ENCODE measurements at regions of chr16 and their contacts with region 1.

Region 1: DNA sequence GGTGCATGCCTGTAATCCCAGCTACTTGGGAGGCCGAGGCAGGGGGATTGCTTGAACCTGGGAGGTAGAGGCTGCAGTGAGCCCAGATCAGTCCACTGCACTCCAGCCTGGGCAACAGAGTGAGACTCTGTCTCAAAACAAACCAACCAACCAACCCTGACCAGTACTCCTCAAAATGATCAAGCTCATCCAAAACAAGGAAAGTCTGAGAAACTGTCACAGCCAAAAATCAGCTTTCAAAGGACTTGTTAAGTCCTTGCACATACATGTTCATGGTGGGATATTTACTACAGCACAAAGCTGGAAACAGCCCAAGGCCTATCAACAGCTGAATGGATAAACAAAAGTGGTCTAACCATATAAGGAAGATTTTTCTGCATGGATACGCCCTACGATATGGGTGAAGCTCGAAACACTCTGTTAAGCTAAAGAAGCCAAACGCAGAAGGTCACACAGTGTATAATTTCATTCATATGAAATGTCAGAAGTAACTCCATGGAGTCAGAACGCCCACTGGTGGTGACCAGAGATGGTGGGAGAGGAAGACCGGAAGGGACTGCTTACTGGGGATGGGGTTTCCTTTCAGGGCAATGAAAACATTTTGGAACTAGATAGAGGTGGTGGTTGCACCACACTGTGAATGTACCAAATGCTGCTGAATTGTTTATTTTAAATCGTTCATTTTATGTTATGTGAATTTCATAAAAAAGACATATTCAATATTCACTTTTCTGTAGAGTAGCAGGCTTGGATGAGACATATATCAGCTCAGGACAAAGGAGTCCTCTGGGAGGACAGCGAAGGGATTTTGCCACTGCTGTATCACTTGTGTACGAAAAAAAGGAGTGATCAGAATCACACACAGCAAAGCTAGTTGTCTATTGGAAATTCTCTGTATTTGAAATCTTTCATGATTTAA is 17.7 kb downstream of the CCL17 start:
- H3K4me3 ChIP-seq: no peak overlapping the region
- H3K27ac ChIP-seq: no peak overlapping the region
- H3K4me1 ChIP-seq: no peaks in the 10 kb centered on the region
- CTCF ChIP-seq: peak; percentile 74

Region 2: GRCh38 chr16:57300387-57301125 is 121.7 kb before region 1 on chr16:
- CTCF ChIA-PET with region 1: interaction called, 290 read pairs
- POLR2A ChIA-PET with region 1: interaction called, 7 read pairs
- H3K4me3 ChIP-seq: peak overlapping the region; percentile 38
- H3K27ac ChIP-seq: no peak overlapping the region
- H3K4me1 ChIP-seq: no peaks in the 10 kb centered on the region
- CTCF ChIP-seq: peak; percentile 99

Region 3: DNA sequence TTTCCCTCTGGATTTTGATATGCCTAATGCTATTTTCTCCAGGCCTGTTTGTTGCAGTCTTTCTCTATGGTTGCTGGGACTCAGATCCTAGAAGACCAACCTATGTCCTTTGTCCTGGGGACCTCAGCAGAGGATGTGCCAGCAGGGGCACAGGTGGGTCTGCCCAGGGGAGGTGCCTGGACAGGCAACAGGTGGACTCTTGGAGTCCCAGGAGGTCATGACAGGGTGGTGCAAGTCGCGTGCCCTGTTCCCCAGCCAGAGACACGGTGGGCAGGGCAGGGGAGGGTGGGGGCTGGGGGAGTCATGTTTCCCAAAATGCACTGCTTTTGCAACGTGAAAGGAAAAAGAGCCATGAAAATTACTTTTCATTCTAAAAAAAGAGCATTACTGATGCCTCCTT is 111.5 kb before region 1 on chr16:
- CTCF ChIA-PET with region 1: interaction called, 290 read pairs
- POLR2A ChIA-PET with region 1: no interaction called
- H3K4me3 ChIP-seq: no peak overlapping the region
- H3K27ac ChIP-seq: no peak overlapping the region
- H3K4me1 ChIP-seq: no peaks in the 10 kb centered on the region
- CTCF ChIP-seq: no peak

Region 4: GRCh38 chr16:57341441-57342303 is 80.6 kb before region 1 on chr16:
- CTCF ChIA-PET with region 1: interaction called, 10 read pairs
- POLR2A ChIA-PET with region 1: no interaction called
- H3K4me3 ChIP-seq: no peak overlapping the region
- H3K27ac ChIP-seq: no peak overlapping the region
- H3K4me1 ChIP-seq: peaks cover 5% of the 10 kb centered on the region
- CTCF ChIP-seq: no peak

Region 5: GRCh38 chr16:57432989-57433388 is 10.7 kb after region 1 on chr16:
- CTCF ChIA-PET with region 1: interaction called, 11 read pairs
- POLR2A ChIA-PET with region 1: no interaction called
- H3K4me3 ChIP-seq: no peak overlapping the region
- H3K27ac ChIP-seq: no peak overlapping the region
- H3K4me1 ChIP-seq: no peaks in the 10 kb centered on the region
- CTCF ChIP-seq: no peak

Region 6: DNA sequence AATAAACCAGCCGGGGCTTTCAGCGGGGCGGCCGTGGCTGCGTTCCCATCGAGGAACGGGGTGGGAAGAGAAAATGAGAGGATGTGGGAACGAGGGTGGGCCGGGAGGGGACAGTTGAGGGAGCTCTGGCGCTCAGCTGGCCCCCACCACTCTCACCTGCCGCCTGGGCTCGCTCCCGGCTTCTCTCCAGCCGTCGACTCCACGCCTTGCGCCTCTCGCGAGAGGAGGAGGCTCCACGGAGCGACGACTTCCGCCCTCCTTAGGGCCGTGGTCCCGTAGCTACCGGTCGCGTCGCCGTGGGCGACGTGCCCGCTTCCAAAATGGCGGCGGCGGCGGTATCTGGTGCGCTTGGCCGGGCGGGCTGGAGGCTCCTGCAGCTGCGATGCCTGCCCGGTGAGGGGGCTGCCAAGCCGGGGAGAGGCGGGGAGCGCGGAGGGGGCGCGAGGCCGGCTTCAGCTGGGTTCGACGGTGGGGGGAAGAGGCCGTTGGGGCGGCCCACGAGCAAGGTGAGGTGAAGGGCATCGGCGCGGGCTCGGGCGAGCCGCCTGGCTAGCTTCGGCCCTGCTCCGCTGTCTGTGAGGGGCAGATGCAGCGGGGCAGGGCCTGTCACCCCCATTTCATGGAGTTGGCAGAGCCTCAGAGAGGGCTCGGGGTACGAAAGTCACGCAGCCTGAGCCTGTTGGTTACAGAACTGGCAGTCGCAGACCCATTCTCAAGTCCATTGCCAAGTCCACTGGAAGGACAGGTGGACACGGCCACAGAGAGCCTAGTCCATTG is 25.1 kb after region 1 on chr16 and contains the starts of genes CIAPIN1 and COQ9:
- CTCF ChIA-PET with region 1: interaction called, 17 read pairs
- POLR2A ChIA-PET with region 1: interaction called, 15 read pairs
- H3K4me3 ChIP-seq: peak within 1 kb of the TSS; percentile 95
- H3K27ac ChIP-seq: peak within 1 kb of the TSS; percentile 77
- H3K4me1 ChIP-seq: no peaks in the 10 kb centered on the region
- CTCF ChIP-seq: no peak

Region 7: DNA sequence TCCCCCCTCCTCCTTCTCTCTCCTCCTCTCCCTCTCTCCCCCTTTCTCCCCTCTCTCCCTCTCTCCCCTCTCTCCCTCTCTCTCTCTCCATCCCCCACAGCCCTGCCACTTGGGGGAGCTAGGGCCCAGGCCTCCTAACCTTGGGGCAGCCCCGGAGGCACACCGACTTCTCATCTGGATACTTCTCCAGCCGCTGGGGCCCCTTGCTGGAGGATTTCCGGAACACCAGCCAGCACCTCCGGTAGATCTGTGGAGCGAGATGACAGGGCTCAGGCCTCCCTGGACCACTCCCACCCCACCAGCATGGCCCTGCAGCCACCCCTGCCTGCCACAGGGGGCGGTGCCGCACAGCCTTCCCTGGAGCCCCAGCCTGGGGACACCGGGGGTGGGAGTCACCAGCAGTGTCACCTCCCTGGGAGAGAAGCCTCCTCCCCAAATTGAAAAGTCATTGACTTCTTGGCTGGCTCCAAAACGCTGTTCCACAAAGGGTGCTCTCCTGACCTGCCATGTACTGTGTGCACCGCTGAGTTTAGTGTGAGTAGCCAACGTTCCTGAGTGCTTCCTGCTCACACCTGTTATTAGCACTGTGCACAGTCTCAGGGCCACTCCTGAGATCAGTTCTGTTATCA is 53.5 kb after region 1 on chr16:
- CTCF ChIA-PET with region 1: no interaction called
- POLR2A ChIA-PET with region 1: no interaction called
- H3K4me3 ChIP-seq: no peak overlapping the region
- H3K27ac ChIP-seq: no peak overlapping the region
- H3K4me1 ChIP-seq: no peaks in the 10 kb centered on the region
- CTCF ChIP-seq: peak; percentile 92

Region 8: DNA sequence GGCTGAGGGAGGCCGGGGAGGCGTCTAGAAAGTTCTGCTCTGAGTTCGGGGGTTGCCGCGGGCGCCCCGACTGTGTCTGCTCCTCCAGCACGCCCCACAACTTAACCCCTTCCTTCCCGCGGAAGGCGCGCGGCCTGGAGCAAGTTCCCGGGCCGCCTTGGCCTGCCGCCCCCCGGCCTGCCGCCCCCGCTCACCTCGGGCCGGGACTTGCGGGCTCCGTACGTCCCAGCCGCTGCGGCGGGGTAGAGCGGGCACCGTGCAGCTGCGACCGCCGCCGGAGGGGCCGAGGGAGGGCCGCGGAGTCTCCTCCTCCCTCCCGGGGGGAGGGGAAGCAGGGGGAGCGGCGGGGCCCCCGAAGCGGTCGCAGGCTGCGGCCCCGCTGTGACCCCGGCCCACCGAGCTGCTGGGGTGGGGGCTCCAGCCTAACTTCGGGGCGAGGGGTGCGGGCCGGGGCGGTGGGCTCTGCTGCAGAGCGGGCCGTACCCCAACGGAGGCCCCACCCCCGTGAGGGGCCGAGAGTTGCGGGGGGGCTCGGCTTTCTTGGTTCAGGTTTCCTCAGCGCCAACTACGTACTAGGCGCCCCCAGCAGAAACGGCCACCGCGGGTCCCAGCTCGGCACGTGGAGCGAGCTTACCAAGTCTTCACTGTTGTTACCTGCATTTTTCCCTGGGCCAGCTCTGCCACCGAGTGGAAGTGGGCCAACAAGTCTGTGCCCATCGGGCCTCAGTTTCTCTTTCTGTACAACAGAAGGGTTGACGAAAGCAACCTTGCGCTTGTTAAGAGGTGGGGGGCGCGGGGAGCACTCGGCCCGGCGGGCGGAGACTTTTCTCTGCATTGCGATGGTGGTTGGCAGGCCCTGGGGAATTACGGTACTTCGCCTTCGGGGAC is 114.3 kb after region 1 on chr16 and contains the start of gene CCDC102A:
- CTCF ChIA-PET with region 1: no interaction called
- POLR2A ChIA-PET with region 1: no interaction called
- H3K4me3 ChIP-seq: peak within 1 kb of the TSS; percentile 58
- H3K27ac ChIP-seq: peak within 1 kb of the TSS; percentile 85; the same call in 1 of the 2 replicates
- H3K4me1 ChIP-seq: peaks cover 15% of the 10 kb centered on the region
- CTCF ChIP-seq: peak; percentile 27; the same call in 1 of the 2 replicates

Measured in HEK293 (cell line).